Calu3 (cell line): ENCODE measurements at regions of chr5 and their contacts with region 1.

Region 1: DNA sequence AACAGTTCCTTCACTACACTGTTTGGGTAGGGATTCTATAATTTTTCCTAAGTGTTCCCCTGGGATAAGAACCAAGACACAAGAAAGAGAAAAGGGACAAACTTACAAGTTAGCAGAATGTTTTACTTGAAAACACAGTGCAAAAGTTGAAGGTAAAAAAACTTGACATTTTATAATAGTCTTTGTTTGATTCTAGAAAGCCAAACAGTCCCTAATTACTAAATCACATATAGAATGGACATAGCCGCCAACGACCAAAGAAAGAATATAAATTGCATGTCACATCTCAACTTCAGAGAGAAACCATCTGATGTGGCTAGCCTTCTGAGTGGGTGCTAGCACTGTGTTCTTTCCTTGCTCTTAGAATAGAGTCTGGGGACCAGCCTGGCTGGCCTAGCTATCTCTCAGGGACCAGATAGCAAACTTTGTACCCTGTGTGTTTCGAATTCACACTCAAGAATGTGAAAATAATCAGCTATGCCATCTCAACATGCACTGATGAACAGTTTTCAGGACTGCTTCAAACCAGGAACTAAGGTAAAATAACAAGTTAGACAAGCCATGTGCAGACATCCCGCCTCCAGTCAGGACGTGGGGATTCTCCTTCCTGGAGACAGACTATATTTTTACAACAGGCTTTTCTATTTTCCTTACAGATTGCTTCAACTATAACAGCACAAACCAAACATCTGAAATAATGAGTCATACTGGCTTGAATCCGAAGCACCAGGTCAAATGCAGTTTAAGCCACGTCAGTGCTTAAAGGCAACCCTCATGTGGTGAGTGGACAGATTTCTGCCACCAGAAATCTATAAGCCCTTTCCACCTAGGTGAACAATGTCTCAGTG is 53.7 kb downstream of the LHFPL2 start:
- DNase-seq: peak; percentile 71
- H3K4me3 Mint-ChIP-seq: peak overlapping the region; percentile 21
- H3K27ac Mint-ChIP-seq: peak overlapping the region; percentile 96
- H3K4me1 Mint-ChIP-seq: peaks cover 83% of the 10 kb centered on the region
- H3K27me3 Mint-ChIP-seq: no peaks in the 10 kb centered on the region
- CTCF ChIP-seq: no peak

Region 2: GRCh38 chr5:78577071-78577807 is 17.6 kb before region 1 on chr5:
- CTCF ChIA-PET with region 1: interaction called, 5 read pairs
- intact Hi-C with region 1: loop called (anchors 2 kb)
- DNase-seq: no peak
- H3K4me3 Mint-ChIP-seq: no peak overlapping the region
- H3K27ac Mint-ChIP-seq: no peak overlapping the region
- H3K4me1 Mint-ChIP-seq: peaks cover 42% of the 10 kb centered on the region
- H3K27me3 Mint-ChIP-seq: no peaks in the 10 kb centered on the region
- CTCF ChIP-seq: no peak

Region 3: DNA sequence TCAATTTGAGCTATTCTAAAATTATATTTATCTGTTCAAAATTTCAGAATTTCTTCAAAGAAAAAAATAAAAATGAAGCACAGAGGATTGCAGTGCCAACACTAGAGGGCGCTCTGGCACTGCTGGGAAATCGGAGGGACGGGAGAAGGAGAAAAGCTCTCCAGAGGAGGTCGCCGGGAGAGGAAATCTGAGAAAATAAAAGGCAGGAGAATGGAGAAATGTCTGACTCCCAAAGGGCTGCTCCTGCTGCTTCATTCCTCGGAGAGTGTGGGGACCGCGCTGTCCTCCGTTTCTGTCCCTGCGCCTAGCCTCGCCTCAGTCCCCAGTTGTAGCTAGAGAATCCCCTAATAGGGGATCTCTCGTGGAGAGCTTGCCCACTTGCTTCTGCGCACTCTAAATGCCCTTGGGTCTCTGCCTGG is 430.2 kb after region 1 on chr5:
- CTCF ChIA-PET with region 1: no interaction called
- intact Hi-C with region 1: no loop called
- DNase-seq: peak; percentile 80
- H3K4me3 Mint-ChIP-seq: peak overlapping the region; percentile 67
- H3K27ac Mint-ChIP-seq: no peak overlapping the region
- H3K4me1 Mint-ChIP-seq: peaks cover 12% of the 10 kb centered on the region
- H3K27me3 Mint-ChIP-seq: no peaks in the 10 kb centered on the region
- CTCF ChIP-seq: peak; percentile 81